Activated T-helper 1 cell treated with anti-CD3 and anti-CD28 coated beads, Interleukin-12 subunit alpha, Interleukin-12 subunit beta, Interleukin-2, Interleukin-4 antibody, amounts not matched to agents 30 ng/mL and 10 ng/mL and 1 ng/mL, durations not matched to agents 14 hours and 24 hours and 36 hours (primary cell): ENCODE measurements at regions of chr1 and their contacts with region 1.

Region 1: DNA sequence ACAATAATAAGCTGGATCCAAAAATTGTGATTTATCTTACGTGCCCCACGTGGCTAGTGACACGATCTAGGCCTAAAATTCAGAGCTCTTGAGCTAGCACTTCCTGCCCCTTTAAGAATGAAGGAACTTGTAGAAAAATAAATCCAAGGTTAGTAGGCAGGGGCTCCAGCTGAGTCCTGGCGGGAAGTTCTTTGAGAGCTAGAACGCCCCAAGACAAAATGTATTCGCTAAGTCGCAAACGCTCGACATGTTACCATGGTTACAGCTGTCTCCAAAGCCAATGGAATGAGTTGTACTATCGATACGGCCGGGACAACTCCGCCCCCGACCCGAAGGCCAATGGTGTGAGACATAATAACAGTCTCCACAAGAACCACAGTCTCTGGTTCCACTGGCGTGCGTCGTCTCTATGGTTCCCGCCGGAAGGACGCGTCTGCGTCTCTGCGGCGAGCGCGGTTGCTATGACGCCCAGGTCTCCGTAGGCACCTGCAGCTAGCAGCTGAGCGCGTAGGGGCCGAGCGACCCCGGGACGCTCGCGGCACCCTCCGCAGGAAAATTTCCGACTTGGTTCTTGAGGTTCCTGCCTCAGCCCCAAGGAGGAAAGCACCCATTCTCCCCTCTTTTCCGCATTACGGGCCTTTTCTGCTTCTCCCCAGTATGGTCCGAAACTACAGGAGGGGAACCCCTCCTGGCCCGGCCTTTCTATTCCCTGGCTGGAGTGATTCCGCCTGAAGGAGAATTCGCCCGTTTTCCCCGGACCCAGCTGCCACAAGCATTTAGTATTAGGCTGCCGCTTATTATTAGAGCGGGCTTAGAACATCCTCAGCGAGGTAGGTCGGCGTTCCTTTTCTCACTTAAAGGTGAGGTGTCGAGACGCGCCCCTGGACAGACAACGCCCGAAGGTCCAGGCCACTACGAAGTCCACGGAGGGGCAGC is at the start of gene CCDC30:
- DNase-seq: peak; percentile 96
- H3K4me3 Mint-ChIP-seq: peak within 1 kb of the TSS; percentile 81
- H3K27ac Mint-ChIP-seq: peak within 1 kb of the TSS; percentile 70
- H3K4me1 Mint-ChIP-seq: peaks cover 31% of the 10 kb centered on the region
- H3K27me3 Mint-ChIP-seq: peaks cover 9% of the 10 kb centered on the region
- total RNA-seq, gene CCDC30: 1.0 and 1.9 TPM in 2 replicates

Region 2: GRCh38 chr1:42380586-42381279 is 82.4 kb before region 1 on chr1 and contains the start of gene RIMKLA:
- intact Hi-C with region 1: loop called (anchors 2 kb)
- DNase-seq: peak; percentile 53
- H3K4me3 Mint-ChIP-seq: peak within 1 kb of the TSS; percentile 85
- H3K27ac Mint-ChIP-seq: peak within 1 kb of the TSS; percentile 49
- H3K4me1 Mint-ChIP-seq: peaks cover 22% of the 10 kb centered on the region
- H3K27me3 Mint-ChIP-seq: peaks cover 25% of the 10 kb centered on the region
- total RNA-seq, gene RIMKLA: 3.3 and 4.8 TPM in 2 replicates

Region 3: DNA sequence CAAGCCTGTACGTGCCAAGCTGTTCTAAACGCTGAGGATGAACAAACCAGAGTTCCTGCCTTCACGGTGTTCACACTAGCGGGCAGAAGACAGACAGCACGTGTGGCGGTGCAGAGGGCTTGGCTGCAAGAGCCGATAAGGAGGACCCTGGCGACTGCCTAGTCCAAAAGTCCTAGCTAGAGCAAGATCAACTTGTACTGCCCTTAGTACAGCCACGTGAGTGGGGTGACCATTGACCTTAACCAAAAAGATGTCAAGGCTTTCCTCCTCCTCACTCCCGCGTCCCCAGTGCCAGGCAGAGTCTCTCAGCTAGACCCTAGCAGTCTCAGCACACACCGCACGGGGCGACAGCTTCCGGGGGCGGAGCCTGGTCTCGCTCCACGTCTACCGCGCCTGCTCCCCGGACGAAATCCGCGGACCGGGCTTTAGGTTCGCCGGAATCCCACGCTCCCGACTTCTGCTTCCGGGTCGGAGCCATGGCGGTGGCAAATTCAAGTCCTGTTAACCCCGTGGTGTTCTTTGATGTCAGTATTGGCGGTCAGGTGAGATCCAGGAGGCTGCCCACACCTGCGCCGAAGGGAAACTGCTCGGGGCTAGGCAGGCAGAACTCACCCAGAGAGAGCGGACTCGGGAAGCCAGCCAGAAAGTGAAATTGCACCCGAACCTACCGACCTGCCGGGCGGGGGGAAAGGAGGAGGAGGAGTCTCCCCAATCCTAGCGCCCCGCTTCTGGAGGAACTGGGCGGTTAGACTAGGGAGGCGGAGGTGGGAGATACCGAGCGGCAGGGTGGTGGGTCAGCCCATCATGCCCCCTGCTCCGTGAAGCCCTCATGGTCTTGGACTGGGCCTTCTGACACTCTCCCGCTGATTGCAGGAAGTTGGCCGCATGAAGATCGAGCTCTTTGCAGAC is 195.1 kb after region 1 on chr1 and contains the start of gene PPIH:
- intact Hi-C with region 1: loop called (anchors 1 kb)
- DNase-seq: peak; percentile 94
- H3K4me3 Mint-ChIP-seq: peak within 1 kb of the TSS; percentile 99
- H3K27ac Mint-ChIP-seq: peak within 1 kb of the TSS; percentile 96
- H3K4me1 Mint-ChIP-seq: peaks cover 46% of the 10 kb centered on the region
- H3K27me3 Mint-ChIP-seq: peaks cover 3% of the 10 kb centered on the region
- total RNA-seq, gene PPIH: 89.7 and 94.6 TPM in 2 replicates

Region 4: GRCh38 chr1:42816585-42817434 is 353.7 kb after region 1 on chr1 and contains the starts of genes ERMAP and SVBP:
- intact Hi-C with region 1: loop called (anchors 2 kb)
- DNase-seq: peak; percentile 90
- H3K4me3 Mint-ChIP-seq: peak within 1 kb of the TSS; percentile 79
- H3K27ac Mint-ChIP-seq: peak within 1 kb of the TSS; percentile 80
- H3K4me1 Mint-ChIP-seq: peaks cover 19% of the 10 kb centered on the region
- H3K27me3 Mint-ChIP-seq: no peaks in the 10 kb centered on the region
- total RNA-seq, gene ERMAP: 3.4 and 3.7 TPM in 2 replicates
- total RNA-seq, gene SVBP: 6.4 and 8.2 TPM in 2 replicates

Region 5: GRCh38 chr1:42846257-42847110 is 383.4 kb after region 1 on chr1 and contains the start of gene ZNF691:
- intact Hi-C with region 1: loop called (anchors 1 kb)
- DNase-seq: peak; percentile 86
- H3K4me3 Mint-ChIP-seq: peak within 1 kb of the TSS; percentile 97
- H3K27ac Mint-ChIP-seq: peak within 1 kb of the TSS; percentile 78
- H3K4me1 Mint-ChIP-seq: peaks cover 41% of the 10 kb centered on the region
- H3K27me3 Mint-ChIP-seq: no peaks in the 10 kb centered on the region
- total RNA-seq, gene ZNF691: 10.0 and 12.9 TPM in 2 replicates

Region 6: DNA sequence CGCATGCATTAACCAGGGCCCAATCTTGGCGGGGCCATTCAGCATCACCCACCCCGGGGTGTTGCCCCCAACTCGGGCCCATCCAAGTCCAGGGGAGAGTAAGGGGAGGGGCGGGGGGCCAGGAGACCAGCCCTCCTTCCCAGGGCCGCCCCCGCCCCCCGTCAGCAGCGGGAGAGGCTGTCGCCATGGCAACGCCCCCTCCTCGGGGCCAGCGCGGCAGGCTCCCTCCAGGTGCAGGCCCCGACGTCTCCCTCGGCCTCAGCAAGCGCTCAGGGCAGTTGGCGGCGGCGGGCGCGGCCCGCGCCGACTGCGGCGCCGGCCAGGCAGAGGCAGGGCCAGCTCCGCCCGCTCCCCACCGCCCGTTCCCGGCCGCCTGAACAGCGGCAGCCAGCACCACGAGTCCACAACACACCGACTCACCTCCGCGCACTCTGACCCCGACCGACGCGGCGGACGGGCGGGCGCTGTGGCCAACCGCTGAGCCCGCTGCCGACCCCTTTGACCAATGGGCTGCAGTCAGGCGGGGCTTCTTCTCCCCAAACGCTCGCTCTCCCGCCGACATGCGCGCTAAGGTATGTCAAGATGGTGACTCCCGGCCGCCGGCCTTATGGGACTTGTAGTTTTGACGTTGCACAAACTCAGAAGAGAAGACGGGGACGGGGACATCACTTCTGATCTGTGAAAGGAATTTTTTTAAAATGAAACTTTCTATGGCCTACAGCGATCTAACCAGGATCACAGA is 1891.9 kb after region 1 on chr1 and contains the start of gene ERI3:
- intact Hi-C with region 1: loop called (anchors 10 kb)
- DNase-seq: peak; percentile 95
- H3K4me3 Mint-ChIP-seq: peak within 1 kb of the TSS; percentile 93
- H3K27ac Mint-ChIP-seq: peak within 1 kb of the TSS; percentile 88
- H3K4me1 Mint-ChIP-seq: peaks cover 34% of the 10 kb centered on the region
- H3K27me3 Mint-ChIP-seq: no peaks in the 10 kb centered on the region
- total RNA-seq, gene ERI3: 51.4 and 55.4 TPM in 2 replicates